Colonic mucosa (tissue), 4 donors: ENCODE measurements at regions of chr11 and their contacts with region 1.

Region 1: GRCh38 chr11:117817368-117818040 is 7.0 kb downstream of the FXYD2 start:
- DNase-seq: peak; percentile 90
- H3K4me3 ChIP-seq: no peak overlapping the region
- H3K27ac ChIP-seq: peak overlapping the region; percentile 67
- H3K4me1 ChIP-seq: peaks cover 18% of the 10 kb centered on the region
- H3K27me3 ChIP-seq: no peaks in the 10 kb centered on the region
- CTCF ChIP-seq: peak; percentile 99

Region 2: GRCh38 chr11:117426269-117426685 is 391.2 kb before region 1 on chr11:
- intact Hi-C with region 1: loop called (anchors 2 kb)
- DNase-seq: peak; percentile 74
- H3K4me3 ChIP-seq: no peak overlapping the region
- H3K27ac ChIP-seq: no peak overlapping the region
- H3K4me1 ChIP-seq: no peaks in the 10 kb centered on the region
- H3K27me3 ChIP-seq: no peaks in the 10 kb centered on the region
- CTCF ChIP-seq: peak; percentile 94

Region 3: GRCh38 chr11:117759305-117759704 is 58.2 kb before region 1 on chr11:
- intact Hi-C with region 1: no loop called
- DNase-seq: no peak
- H3K4me3 ChIP-seq: no peak overlapping the region
- H3K27ac ChIP-seq: no peak overlapping the region
- H3K4me1 ChIP-seq: no peaks in the 10 kb centered on the region
- H3K27me3 ChIP-seq: no peaks in the 10 kb centered on the region
- CTCF ChIP-seq: no peak

Region 4: DNA sequence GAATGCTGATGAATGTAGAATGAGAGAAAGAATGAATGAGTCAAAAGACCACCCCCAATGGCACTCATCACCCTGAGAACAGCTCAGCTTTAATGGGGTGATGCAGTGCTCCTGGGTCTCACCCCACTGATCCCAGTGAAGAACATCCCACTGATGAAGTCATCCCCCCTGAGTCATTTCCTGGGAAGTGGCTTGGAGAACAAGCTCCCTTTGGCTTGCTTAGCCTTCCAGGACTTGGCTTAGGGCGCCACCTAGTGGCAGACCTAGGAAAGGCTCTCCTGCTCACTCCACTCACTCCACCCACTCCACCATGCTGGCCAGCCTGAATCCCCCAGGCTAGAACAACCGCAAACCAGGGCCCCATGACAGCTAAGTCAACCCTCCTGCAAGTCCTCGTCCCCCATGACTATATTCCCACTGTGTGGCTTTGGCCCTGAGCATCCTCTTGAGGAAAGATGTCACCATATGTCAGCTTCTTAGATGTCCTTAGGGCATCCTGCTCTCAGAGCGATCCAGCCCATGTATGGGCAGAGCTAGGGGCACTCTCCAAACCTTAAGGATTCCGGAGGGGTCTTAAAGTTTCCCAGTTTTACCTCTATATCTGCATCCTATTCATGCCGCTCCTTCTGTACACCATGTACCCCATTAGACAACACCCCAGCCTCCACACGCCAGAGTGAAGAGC is 129.5 kb after region 1 on chr11:
- intact Hi-C with region 1: loop called (anchors 5 kb)
- DNase-seq: peak; percentile 89
- H3K4me3 ChIP-seq: no peak overlapping the region
- H3K27ac ChIP-seq: no peak overlapping the region
- H3K4me1 ChIP-seq: no peaks in the 10 kb centered on the region
- H3K27me3 ChIP-seq: no peaks in the 10 kb centered on the region
- CTCF ChIP-seq: peak; percentile 98